Common myeloid progenitor, CD34-positive (primary cell): ENCODE measurements at regions of chr1 and their contacts with region 1.

Region 1: GRCh38 chr1:3453203-3453761 is 1.2 kb upstream of the ARHGEF16 start:
- DNase-seq: peak; percentile 62 to 72 (median 65)
- H3K4me3 ChIP-seq: no peak overlapping the region
- H3K27ac ChIP-seq: peak overlapping the region in 1 of 2 experiments; percentile 25
- H3K4me1 ChIP-seq: peaks cover 0 to 26% (median 18%) of the 10 kb centered on the region in 4 experiments
- H3K27me3 ChIP-seq: peaks cover 0 to 10% (median 1%) of the 10 kb centered on the region in 5 experiments

Region 2: DNA sequence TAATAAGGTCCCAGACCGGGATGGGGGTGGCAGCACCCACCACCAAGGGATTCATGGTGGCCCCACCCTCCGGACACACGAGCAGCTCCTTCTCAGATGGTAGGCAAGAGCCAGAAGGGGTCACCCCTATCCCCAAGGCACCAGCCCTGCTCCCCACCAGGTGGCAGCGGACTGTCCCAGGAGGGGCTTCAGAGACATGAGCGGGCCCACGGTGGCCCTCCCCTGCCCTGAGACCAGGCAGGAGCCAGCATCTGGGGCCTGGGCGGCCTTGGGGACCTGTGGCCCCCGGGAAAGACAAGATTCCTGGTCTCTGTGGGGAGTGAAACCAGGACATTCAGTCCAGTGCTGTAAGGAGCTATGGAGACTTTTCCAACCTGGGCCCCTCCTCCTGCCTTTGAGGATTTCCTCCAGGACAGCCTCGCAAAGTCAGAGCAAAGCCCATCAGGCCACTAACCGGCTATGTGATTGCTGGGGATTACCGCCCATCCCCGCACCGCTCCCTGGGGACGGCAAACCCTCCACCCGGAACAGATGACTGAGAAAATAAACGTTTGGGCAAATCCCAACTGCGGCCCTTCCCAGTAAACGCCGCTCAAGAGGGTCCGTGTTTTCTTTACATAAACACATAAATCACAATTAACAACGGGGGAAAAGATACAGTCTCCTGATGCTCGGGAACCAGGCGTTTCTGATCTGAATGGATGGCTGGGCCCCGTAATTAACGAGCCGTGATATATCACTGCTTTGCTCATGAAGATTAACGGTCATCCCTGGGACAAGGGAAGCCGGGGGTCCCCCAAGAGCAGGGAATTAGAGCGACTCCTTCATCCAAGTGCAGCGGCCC is 49.7 kb before region 1 on chr1:
- CTCF ChIA-PET with region 1: no interaction called
- POLR2A ChIA-PET with region 1: no interaction called
- DNase-seq: no peak
- H3K4me3 ChIP-seq: no peak overlapping the region
- H3K27ac ChIP-seq: no peak overlapping the region
- H3K4me1 ChIP-seq: peaks cover 0 to 7% (median 2%) of the 10 kb centered on the region in 4 experiments
- H3K27me3 ChIP-seq: no peaks in the 10 kb centered on the region

Region 3: GRCh38 chr1:3417082-3417739 is 36.1 kb before region 1 on chr1:
- CTCF ChIA-PET with region 1: no interaction called
- POLR2A ChIA-PET with region 1: no interaction called
- DNase-seq: peak in 1 of 3 donors; percentile 32
- H3K4me3 ChIP-seq: no peak overlapping the region
- H3K27ac ChIP-seq: no peak overlapping the region
- H3K4me1 ChIP-seq: peaks cover 0 to 10% (median 8%) of the 10 kb centered on the region in 4 experiments
- H3K27me3 ChIP-seq: no peaks in the 10 kb centered on the region

Region 4: GRCh38 chr1:3434406-3435110 is 18.7 kb before region 1 on chr1:
- CTCF ChIA-PET with region 1: no interaction called
- POLR2A ChIA-PET with region 1: no interaction called
- DNase-seq: no peak
- H3K4me3 ChIP-seq: no peak overlapping the region
- H3K27ac ChIP-seq: no peak overlapping the region
- H3K4me1 ChIP-seq: no peaks in the 10 kb centered on the region
- H3K27me3 ChIP-seq: no peaks in the 10 kb centered on the region

Region 5: GRCh38 chr1:3465655-3466321 is 12.5 kb after region 1 on chr1:
- CTCF ChIA-PET with region 1: interaction called, 24 read pairs
- POLR2A ChIA-PET with region 1: no interaction called
- DNase-seq: no peak
- H3K4me3 ChIP-seq: no peak overlapping the region
- H3K27ac ChIP-seq: no peak overlapping the region
- H3K4me1 ChIP-seq: no peaks in the 10 kb centered on the region
- H3K27me3 ChIP-seq: no peaks in the 10 kb centered on the region

Region 6: DNA sequence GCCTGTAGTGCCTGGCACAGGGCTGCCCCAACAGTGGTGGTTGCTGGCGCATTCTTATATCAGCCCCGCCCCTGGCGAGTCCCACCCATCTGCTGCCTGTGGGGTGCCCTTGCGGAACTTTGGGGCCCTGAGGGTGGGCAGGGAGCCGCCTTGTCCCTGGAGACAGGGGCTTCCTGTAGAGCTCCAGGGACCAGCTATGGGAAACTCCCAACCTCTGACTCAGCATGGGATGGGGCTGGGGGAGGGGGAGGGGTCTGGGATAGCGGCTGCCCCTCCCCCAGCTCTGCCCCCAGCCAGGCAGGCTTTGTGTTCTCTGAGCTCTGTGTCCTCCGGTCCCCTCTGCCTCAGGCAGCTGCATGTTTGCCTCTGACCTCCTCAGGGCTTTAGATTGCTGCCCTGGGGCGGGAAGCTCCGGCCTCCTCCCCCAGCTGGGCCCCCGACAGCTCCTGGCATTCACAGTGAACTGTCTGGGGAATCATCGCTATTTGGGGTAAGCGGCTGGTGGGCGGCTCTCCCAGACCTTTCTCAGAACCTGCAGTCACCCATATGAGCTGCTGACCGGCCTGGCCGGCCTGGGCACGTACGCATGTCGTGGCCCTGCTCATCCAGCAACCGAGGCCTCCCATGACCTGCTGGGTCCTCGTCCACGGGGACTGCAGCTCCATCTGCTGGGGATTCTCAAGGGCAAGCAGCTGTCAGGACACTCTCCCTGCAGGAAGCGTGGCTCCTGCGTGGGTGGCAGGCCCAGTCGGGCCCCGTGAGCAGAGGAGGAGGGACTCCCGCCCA is 18.2 kb after region 1 on chr1:
- CTCF ChIA-PET with region 1: interaction called, 23 read pairs
- POLR2A ChIA-PET with region 1: no interaction called
- DNase-seq: peak in 2 of 3 donors; percentile 26 to 43
- H3K4me3 ChIP-seq: no peak overlapping the region
- H3K27ac ChIP-seq: no peak overlapping the region
- H3K4me1 ChIP-seq: peaks cover 0 to 5% (median 0%) of the 10 kb centered on the region in 4 experiments
- H3K27me3 ChIP-seq: no peaks in the 10 kb centered on the region

Region 7: DNA sequence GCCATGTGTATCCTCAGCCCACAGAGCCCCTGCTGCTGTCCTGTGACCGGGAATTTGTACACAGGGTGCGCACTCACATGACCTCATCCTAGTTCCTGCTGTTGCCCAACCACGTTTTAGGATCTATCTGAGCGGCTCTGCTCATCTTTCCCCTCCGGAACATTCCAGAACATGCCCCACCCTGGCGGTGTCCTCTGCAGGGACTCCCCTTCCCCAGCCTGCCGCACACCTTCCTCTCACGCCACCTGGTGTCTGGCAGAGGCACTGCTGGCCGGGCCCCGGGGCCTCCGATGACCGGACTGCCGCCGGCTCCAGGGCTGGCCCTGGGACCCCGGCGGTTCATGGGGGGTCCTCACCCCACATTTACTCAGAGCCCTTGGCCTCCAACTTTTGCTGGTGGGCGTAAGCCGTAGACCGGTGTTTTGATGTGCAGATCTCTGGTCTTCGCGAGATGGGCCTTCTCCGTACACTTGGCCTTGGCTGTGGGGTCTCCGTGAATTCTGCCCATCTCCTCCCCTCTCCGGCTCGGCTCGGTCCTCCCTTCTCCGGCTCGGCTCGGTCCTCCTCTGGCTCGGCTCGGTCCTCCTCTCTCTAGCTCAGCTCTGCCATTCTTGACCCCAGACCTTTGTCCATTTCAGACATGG is 30.6 kb after region 1 on chr1:
- CTCF ChIA-PET with region 1: interaction called, 26 read pairs
- POLR2A ChIA-PET with region 1: no interaction called
- DNase-seq: peak in 2 of 3 donors; percentile 34 to 48
- H3K4me3 ChIP-seq: no peak overlapping the region
- H3K27ac ChIP-seq: no peak overlapping the region
- H3K4me1 ChIP-seq: peaks cover 0 to 1% (median 0%) of the 10 kb centered on the region in 4 experiments
- H3K27me3 ChIP-seq: peaks cover 0 to 24% (median 0%) of the 10 kb centered on the region in 5 experiments

Region 8: DNA sequence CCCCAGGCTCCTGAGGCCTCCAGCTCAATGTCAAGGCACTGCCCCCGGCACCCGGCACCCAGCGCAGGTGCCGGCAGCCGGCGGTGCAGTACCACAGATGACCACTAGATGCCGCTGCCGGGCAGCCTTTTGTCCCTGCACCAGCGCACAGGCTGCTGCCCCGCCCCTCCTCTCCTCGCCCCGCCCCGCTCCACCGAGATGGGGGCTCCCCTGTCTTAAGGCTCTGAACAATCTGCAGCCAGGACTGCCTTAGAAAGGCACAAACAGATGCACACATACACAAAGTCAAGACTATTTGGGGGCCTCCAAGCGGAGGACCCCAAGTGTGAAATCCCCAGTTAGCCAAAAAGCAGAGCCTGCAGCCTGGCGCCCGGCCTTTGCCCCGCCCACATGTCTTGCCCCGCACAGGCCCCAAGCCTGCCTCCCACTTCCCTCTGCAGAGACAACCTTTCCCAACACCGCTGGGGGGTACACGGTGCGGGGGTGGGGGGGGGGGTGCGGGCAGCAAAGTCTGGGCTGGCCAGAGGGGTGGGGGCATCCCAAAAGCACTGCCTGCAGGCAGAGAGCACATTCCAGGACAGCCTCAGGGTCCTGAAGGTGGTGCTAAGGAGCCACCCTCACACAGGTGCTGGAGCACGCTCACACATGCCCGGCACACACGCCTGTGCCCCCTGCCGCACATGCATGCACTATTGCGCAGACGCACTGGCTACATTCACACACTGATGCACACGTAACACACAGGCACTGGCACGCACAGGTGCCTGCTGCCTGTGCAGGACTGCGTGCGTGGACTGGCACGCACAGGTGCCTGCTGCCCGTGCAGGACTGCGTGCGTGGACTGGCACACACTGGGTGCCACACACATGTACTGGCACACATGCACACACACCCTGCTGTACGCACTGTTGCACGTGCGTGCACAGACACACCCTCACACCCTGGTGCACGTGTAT is 38.3 kb after region 1 on chr1:
- CTCF ChIA-PET with region 1: interaction called, 21 read pairs
- POLR2A ChIA-PET with region 1: no interaction called
- DNase-seq: peak; percentile 53 to 78 (median 77)
- H3K4me3 ChIP-seq: peak overlapping the region in 4 of 7 experiments; percentile 29 to 59 (median 38)
- H3K27ac ChIP-seq: no peak overlapping the region
- H3K4me1 ChIP-seq: peaks cover 0 to 8% (median 3%) of the 10 kb centered on the region in 4 experiments
- H3K27me3 ChIP-seq: no peaks in the 10 kb centered on the region

Region 9: DNA sequence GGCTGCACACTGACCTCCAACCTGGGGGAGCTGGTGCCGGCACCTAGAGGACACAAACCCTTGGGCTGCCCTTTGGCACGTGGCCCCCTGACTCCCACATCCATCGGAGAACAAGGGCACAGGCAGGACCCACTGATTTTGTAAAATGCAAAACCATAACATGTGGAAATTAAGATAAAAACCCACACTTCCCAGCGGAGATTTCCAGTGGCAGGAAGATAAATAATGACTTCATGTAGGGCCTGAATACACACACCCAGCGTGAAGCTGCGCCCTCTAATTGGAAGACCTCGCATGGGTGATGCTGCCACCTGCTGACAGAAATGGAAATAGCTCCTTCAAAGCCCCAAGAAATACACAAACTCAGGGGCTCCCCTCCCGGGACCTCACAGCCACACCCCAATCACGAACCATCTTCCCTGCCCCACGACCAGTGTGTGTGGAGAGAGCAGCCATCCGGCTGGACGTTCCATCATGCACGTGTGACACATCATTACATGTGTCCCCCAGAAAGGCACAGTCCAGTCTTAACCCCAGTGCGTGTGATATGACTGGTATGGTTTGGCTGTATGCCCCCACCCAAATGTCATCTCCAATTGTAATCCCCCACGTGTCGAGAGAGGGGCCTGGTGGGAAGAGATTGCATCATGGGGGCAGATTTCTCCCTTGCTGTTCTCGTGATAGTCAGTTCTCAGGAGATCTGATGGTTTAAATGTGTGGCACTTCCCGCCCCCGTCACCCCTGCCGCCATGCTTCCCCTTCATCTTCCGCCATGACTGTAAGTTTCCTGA is 165.8 kb after region 1 on chr1:
- CTCF ChIA-PET with region 1: interaction called, 15 read pairs
- POLR2A ChIA-PET with region 1: no interaction called
- DNase-seq: peak; percentile 90 to 95 (median 94)
- H3K4me3 ChIP-seq: peak overlapping the region in 3 of 7 experiments; percentile 22 to 54 (median 35)
- H3K27ac ChIP-seq: no peak overlapping the region
- H3K4me1 ChIP-seq: peaks cover 0 to 32% (median 25%) of the 10 kb centered on the region in 4 experiments
- H3K27me3 ChIP-seq: no peaks in the 10 kb centered on the region